ENCODE measurements at regions of chr2 and their contacts with region 1.

Region 1: GRCh38 chr2:26764078-26764887 is at the start of gene SLC35F6:
- DNase-seq: peak; percentile 87
- H3K4me3 ChIP-seq: peak within 1 kb of the TSS; percentile 84
- H3K27ac ChIP-seq: no peak within 1 kb of the TSS
- H3K4me1 ChIP-seq: peaks cover 11% of the 10 kb centered on the region
- CTCF ChIP-seq: no peak
- total RNA-seq, gene SLC35F6: 10.4 and 10.6 TPM in 2 replicates

Region 2: GRCh38 chr2:26785431-26786206 is 21.3 kb after region 1 on chr2 and contains the start of gene CENPA:
- CTCF ChIA-PET with region 1: no interaction called
- POLR2A ChIA-PET with region 1: no interaction called
- intact Hi-C with region 1: loop called (anchors 2 kb)
- DNase-seq: peak; percentile 99
- H3K4me3 ChIP-seq: peak within 1 kb of the TSS; percentile 83
- H3K27ac ChIP-seq: peak within 1 kb of the TSS; percentile 73
- H3K4me1 ChIP-seq: peaks cover 23% of the 10 kb centered on the region
- CTCF ChIP-seq: no peak
- total RNA-seq, gene CENPA: 27.8 and 48.2 TPM in 2 replicates

Region 3: GRCh38 chr2:27647289-27647688 is 883.0 kb after region 1 on chr2:
- CTCF ChIA-PET with region 1: no interaction called
- POLR2A ChIA-PET with region 1: no interaction called
- intact Hi-C with region 1: no loop called
- DNase-seq: no peak
- H3K4me3 ChIP-seq: no peak overlapping the region
- H3K27ac ChIP-seq: no peak overlapping the region
- H3K4me1 ChIP-seq: no peaks in the 10 kb centered on the region
- CTCF ChIP-seq: no peak